Naive thymus-derived CD4-positive, alpha-beta T cell (primary cell): ENCODE measurements at regions of chr2 and their contacts with region 1.

Region 1: DNA sequence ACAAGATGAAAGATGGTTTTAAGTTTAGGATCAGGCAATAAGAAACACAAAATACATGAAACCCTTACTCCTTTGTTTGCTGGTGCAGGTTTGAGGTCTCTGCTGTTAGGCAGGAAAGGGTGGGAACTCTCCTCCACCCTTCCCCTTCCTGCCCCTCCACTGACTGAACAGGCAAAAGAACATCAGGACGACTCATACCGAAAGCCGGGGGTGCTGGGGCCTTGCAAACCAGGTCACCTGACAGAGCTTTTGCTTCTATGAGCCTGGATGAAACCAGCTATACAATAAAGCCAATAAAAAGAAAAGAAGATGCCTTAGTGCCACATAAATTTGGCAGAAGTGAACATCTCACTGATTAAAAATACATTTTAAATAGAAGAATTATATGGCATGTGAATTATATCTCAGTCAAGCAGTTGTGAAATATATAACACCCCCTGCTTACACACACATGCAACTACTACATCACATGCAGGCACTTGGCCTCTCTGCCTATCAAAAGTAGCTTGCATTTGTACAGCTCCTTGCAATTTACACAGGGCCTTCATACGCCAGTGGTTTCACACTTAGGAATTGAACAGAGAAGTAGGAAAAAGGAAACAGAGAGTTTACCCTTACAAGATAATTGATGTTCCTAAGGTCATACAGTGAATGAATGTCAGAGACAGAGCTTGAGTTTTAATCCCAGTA is 215.1 kb upstream of the TRIB2 start:
- DNase-seq: peak in 8 of 9 donors; percentile 39 to 74 (median 70)
- ATAC-seq: peak; percentile 86
- H3K4me3 ChIP-seq: peak overlapping the region; percentile 5
- H3K4me3 Mint-ChIP-seq: peak overlapping the region; percentile 64 to 83 (median 77)
- H3K27ac ChIP-seq: peak overlapping the region; percentile 69
- H3K27ac Mint-ChIP-seq: peak overlapping the region; percentile 87 to 96 (median 91)
- H3K4me1 ChIP-seq: peaks cover 89 to 98% of the 10 kb centered on the region in 2 donors
- H3K4me1 Mint-ChIP-seq: peaks cover 74 to 100% (median 98%) of the 10 kb centered on the region in 7 donors
- H3K27me3 ChIP-seq: no peaks in the 10 kb centered on the region
- H3K27me3 Mint-ChIP-seq: no peaks in the 10 kb centered on the region

Region 2: GRCh38 chr2:12293874-12294273 is 207.7 kb before region 1 on chr2:
- CTCF ChIA-PET with region 1: no interaction called
- POLR2A ChIA-PET with region 1: no interaction called
- intact Hi-C with region 1: loop called in 1 of 2 experiments (anchors 5 kb)
- DNase-seq: no peak
- ATAC-seq: peak; percentile 27
- H3K4me3 ChIP-seq: no peak overlapping the region
- H3K4me3 Mint-ChIP-seq: peak overlapping the region in 5 of 10 donors; percentile 13 to 75 (median 60)
- H3K27ac ChIP-seq: no peak overlapping the region
- H3K27ac Mint-ChIP-seq: peak overlapping the region in 4 of 9 donors; percentile 18 to 90 (median 68)
- H3K4me1 ChIP-seq: peaks cover 0 to 16% of the 10 kb centered on the region in 2 donors
- H3K4me1 Mint-ChIP-seq: peaks cover 19 to 53% (median 40%) of the 10 kb centered on the region in 7 donors
- H3K27me3 ChIP-seq: no peaks in the 10 kb centered on the region
- H3K27me3 Mint-ChIP-seq: peaks cover 0 to 4% (median 0%) of the 10 kb centered on the region in 5 donors

Region 3: DNA sequence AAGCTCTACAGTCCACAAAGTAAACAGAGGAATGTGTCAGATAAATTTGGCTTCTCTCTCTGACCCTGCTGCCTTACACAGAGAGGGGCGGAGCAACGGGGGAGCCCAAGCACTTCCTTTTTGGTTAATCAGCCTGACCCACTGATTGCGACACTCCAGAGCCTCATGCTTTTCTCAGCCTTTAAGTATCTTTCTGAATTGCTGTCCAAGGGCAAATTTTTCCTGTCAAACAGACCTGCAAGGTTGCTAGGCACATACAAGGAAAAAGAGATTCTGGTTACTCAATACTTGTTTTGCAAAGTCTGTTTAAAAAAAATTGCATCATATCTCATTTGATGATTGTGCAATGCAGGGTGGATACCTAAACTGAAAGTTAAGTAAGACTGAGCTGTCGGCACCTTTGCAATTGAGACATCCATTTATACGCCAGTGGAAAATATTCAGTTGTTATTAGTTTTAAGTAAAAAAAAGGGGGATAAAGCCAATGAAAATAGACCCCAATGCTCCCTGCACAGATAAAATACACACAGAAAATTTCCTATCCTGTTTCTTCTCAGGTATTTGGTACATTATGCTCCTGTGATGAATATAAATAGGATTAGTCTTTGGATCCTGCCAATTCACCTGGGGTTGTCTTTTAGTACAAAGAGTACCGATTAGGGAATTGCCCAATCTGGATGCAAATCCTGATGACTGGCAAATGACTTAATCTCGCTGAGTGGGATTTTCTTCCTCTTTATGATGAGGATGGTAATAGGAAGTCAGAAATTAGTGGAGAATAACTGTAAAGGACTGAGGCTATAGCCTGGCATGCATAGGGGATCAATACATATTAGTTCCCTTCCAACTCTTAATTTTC is 45.1 kb before region 1 on chr2:
- CTCF ChIA-PET with region 1: interaction called, 3 read pairs
- POLR2A ChIA-PET with region 1: interaction called, 8 read pairs
- intact Hi-C with region 1: loop called (anchors 2 kb)
- DNase-seq: peak; percentile 23 to 52 (median 41)
- ATAC-seq: peak; percentile 88
- H3K4me3 ChIP-seq: peak overlapping the region; percentile 50
- H3K4me3 Mint-ChIP-seq: peak overlapping the region; percentile 66 to 89 (median 79)
- H3K27ac ChIP-seq: peak overlapping the region; percentile 59
- H3K27ac Mint-ChIP-seq: peak overlapping the region; percentile 82 to 99 (median 91)
- H3K4me1 ChIP-seq: peaks cover 15 to 20% of the 10 kb centered on the region in 2 donors
- H3K4me1 Mint-ChIP-seq: peaks cover 29 to 57% (median 39%) of the 10 kb centered on the region in 7 donors
- H3K27me3 ChIP-seq: no peaks in the 10 kb centered on the region
- H3K27me3 Mint-ChIP-seq: no peaks in the 10 kb centered on the region

Region 4: GRCh38 chr2:12514631-12515433 is 13.2 kb after region 1 on chr2:
- CTCF ChIA-PET with region 1: interaction called, 4 read pairs
- POLR2A ChIA-PET with region 1: interaction called, 21 read pairs
- intact Hi-C with region 1: loop called (anchors 1 kb)
- DNase-seq: peak in 4 of 9 donors; percentile 34 to 55 (median 46)
- ATAC-seq: peak; percentile 84
- H3K4me3 ChIP-seq: no peak overlapping the region
- H3K4me3 Mint-ChIP-seq: peak overlapping the region; percentile 9 to 77 (median 60)
- H3K27ac ChIP-seq: peak overlapping the region; percentile 35
- H3K27ac Mint-ChIP-seq: peak overlapping the region; percentile 23 to 89 (median 77)
- H3K4me1 ChIP-seq: peaks cover 33 to 40% of the 10 kb centered on the region in 2 donors
- H3K4me1 Mint-ChIP-seq: peaks cover 37 to 91% (median 75%) of the 10 kb centered on the region in 7 donors
- H3K27me3 ChIP-seq: no peaks in the 10 kb centered on the region
- H3K27me3 Mint-ChIP-seq: no peaks in the 10 kb centered on the region